ENCODE measurements at regions of chr15 and their contacts with region 1.

Region 1: DNA sequence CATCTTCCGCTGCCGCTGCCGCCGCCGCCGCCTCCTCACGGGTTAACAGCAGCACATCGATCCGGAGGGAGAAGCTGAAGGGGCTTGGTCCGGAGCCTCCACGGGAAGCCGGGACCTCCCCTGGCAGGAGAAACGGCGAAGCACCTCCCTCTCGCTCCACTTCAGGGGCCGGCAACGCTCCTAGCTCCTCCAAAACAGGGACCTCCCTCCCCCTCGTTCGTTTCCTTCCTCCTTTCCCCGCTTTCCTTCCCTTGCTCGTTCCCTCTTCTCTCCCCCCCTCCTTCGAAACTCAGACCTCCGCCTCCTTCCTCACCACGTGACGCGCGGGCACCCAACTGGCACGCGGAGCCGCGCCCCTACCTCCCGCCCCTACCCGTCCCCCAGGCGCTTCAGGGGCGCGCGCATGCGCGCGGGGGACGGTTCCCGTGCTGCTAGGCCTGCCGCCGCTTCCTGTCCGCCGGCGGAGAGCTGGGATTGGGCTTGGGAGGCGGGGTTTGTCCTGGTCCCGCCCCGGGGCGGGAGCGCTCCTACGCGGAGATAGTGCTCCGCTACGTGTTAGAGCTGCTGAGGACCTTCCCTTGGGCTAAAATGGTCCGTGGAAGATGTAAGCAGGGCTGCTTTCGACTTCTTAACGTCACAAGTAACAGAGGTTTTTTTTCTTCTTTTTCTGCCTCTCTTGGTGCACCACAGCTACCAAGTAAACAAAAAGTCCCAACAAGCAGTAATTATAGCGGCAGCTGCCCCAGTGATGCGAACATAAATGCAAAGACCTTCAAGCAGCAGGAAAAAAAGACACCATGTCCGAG is at the start of gene ADAM10:
- DNase-seq: peak; percentile 98
- H3K4me3 Mint-ChIP-seq: peak within 1 kb of the TSS; percentile 93
- H3K27ac Mint-ChIP-seq: peak within 1 kb of the TSS; percentile 95
- H3K4me1 Mint-ChIP-seq: peaks cover 37% of the 10 kb centered on the region
- H3K27me3 Mint-ChIP-seq: no peaks in the 10 kb centered on the region
- total RNA-seq, gene ADAM10: 98.7 and 116 TPM in 2 replicates

Region 2: DNA sequence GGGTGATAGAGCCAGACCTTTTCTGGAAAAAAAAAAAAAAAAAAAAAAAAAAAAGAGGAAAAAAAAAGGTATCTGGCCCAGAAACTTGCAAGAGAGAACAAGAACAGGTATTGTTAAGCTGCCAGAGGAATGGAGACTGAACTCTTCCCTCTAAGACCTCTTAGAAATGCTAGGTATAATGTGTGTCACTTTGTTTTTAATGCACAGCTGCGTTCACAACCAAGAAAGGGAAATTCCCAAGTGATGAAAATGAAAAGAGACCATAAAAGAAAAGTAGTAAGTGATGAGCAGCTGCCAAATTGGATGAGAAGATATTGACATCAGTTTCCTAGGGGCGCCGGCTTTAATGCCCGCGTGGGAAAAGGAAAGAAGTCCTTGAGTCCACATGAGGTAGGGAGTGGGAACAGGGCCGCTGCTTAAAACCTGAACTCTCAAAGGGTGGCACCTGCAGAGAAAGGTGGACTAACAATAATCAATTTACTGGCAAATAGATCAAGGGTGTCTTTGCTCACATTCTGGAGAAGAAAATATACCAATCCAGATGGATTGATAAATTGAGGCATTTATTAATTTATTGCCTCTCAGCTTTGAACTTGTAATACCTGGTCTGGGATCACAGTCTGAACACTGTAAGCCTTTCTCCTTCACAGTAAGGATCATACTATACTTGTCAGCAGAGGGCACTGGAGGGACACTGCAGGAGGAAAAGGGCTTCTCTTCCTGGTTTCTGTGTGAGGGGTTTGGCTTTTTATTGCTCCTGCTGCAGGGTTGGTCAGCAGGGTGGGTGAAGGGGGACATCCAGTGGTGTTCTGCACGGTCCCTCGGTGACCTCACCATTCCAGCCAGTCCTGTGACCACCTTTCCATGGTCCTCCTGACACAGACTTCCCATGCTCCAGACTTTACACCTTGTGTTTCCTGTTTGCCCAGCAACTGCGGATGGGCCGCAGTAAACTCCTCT is 480.0 kb before region 1 on chr15:
- intact Hi-C with region 1: loop called (anchors 5 kb)
- DNase-seq: peak; percentile 28
- H3K4me3 Mint-ChIP-seq: peak overlapping the region; percentile 6
- H3K27ac Mint-ChIP-seq: peak overlapping the region; percentile 6
- H3K4me1 Mint-ChIP-seq: peaks cover 16% of the 10 kb centered on the region
- H3K27me3 Mint-ChIP-seq: peaks cover 5% of the 10 kb centered on the region

Region 3: DNA sequence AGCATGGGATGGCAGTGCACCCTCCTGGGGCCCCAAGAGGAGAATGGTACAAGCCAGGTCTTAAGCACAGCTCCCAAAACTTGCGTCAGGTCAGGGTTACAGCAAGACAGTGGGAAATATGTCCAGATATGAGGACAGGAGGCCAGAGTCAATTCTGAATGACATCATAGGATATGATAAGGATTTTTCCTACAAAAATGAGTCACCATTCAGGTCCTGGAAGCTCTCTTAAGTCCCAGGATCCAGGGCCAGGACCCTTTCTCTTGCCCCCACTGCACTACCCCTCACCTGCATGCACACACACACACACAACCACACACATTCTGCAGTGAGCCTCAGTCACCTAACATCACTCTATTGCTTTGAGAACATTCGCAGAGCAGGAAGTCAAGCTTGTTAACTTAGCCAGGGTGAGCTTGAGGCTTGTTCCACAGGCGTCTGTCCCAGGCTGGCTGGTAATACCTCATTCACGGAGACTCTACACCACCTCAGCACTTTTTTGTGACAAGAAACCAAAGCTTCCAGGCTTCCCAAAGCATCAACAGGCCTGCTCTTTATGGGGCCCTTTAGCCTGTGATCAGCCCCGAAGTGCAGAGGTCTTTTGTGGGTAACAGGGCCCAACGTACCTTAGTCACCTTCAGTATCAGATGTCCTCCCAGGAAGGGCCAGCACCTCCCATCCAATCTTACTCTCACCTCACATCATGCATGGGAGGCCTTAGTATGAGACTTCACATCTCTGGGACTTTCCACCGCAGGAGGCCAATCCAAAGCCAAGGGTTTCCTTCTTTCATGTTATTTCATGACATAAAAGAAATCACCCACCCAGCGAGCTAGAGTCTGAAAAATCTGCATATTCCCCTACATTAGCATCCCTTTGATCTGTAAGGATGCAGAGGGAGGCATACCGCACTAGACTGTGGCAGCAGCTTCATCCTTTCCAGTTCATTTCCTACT is 391.9 kb before region 1 on chr15:
- intact Hi-C with region 1: loop called (anchors 1 kb)
- DNase-seq: peak; percentile 35
- H3K4me3 Mint-ChIP-seq: peak overlapping the region; percentile 17
- H3K27ac Mint-ChIP-seq: peak overlapping the region; percentile 85
- H3K4me1 Mint-ChIP-seq: peaks cover 40% of the 10 kb centered on the region
- H3K27me3 Mint-ChIP-seq: peaks cover 2% of the 10 kb centered on the region

Region 4: GRCh38 chr15:58546635-58547627 is 202.8 kb before region 1 on chr15:
- intact Hi-C with region 1: loop called (anchors 1 kb)
- DNase-seq: no peak
- H3K4me3 Mint-ChIP-seq: no peak overlapping the region
- H3K27ac Mint-ChIP-seq: peak overlapping the region; percentile 97
- H3K4me1 Mint-ChIP-seq: peaks cover 63% of the 10 kb centered on the region
- H3K27me3 Mint-ChIP-seq: no peaks in the 10 kb centered on the region

Region 5: DNA sequence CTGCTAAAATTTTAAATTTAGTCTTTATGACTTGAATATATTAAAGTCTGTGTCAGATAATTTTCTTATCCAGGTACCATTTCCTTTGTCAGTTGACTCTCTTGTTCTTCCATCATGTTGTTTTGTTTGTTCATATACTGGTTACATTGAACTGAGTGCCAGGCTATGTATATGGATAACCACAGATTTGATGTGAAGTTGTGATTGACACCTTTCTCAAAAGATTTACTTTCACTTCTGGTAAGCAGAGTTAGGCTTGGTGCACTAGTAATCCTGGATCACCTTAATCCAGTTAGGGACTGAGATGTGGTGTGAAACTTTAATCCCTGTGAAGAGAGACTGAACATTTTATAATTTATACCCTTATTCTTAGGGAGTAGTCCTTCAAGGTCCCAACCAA is 99.6 kb before region 1 on chr15:
- intact Hi-C with region 1: no loop called
- DNase-seq: no peak
- H3K4me3 Mint-ChIP-seq: no peak overlapping the region
- H3K27ac Mint-ChIP-seq: no peak overlapping the region
- H3K4me1 Mint-ChIP-seq: peaks cover 15% of the 10 kb centered on the region
- H3K27me3 Mint-ChIP-seq: no peaks in the 10 kb centered on the region

Region 6: DNA sequence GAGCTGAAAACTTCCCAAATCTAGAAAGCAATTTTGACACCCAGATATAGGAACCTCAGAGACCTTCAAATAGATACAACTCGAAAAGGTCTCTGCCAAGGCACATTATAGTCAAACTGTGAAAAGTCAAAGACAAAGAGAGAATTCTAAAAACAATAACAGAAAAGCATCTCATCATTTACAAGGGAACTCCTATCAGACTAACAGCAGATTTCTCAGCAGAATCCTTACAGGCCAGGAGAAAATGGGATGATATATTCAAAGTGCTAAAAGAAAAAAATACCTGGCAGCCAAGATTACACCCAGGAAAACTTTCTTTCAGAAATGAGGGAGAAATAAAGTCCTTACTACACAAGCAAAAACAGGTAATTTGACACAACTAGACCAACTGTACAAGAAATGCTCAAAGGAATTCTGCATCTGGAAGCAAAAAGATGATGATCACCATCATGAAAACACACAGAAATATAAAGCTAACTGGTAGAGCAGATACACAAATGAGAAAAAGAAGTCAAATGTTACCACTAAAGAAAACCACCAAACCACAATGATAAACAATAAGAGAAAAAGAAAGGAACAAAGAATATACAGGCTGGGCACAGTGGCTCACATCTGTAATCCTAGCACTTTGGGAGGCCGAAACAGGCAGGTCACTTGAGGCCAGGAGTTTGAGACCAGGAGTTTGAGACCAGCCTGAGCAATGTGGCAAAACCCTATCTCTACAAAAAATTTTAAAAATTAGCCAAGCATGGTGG is 50.7 kb before region 1 on chr15:
- intact Hi-C with region 1: loop called (anchors 1 kb)
- DNase-seq: no peak
- H3K4me3 Mint-ChIP-seq: peak overlapping the region; percentile 8
- H3K27ac Mint-ChIP-seq: peak overlapping the region; percentile 85
- H3K4me1 Mint-ChIP-seq: peaks cover 57% of the 10 kb centered on the region
- H3K27me3 Mint-ChIP-seq: no peaks in the 10 kb centered on the region

Region 7: GRCh38 chr15:58770857-58771620 is 21.3 kb after region 1 on chr15 and contains the start of gene MINDY2:
- intact Hi-C with region 1: loop called (anchors 1 kb)
- DNase-seq: peak; percentile 94
- H3K4me3 Mint-ChIP-seq: no peak within 1 kb of the TSS
- H3K27ac Mint-ChIP-seq: peak within 1 kb of the TSS; percentile 88
- H3K4me1 Mint-ChIP-seq: peaks cover 9% of the 10 kb centered on the region
- H3K27me3 Mint-ChIP-seq: no peaks in the 10 kb centered on the region
- total RNA-seq, gene MINDY2: 9.0 and 9.7 TPM in 2 replicates

Measured in activated T-helper 1 cell treated with anti-CD3 and anti-CD28 coated beads, Interleukin-12 subunit alpha, Interleukin-12 subunit beta, Interleukin-2, Interleukin-4 antibody, amounts not matched to agents 30 ng/mL and 10 ng/mL and 1 ng/mL, durations not matched to agents 14 hours and 24 hours and 36 hours (primary cell).